Thyroid gland (tissue), 4 donors: ENCODE measurements at regions of chr9 and their contacts with region 1.

Region 1: GRCh38 chr9:130682490-130683121 is 11.0 kb upstream of the EXOSC2 start:
- DNase-seq: peak; percentile 85 to 89
- H3K4me3 ChIP-seq: peak overlapping the region in 1 of 3 donors; percentile 43
- H3K27ac ChIP-seq: no peak overlapping the region
- H3K4me1 ChIP-seq: peaks cover 12 to 14% of the 10 kb centered on the region in 2 donors
- H3K27me3 ChIP-seq: no peaks in the 10 kb centered on the region
- CTCF ChIP-seq: peak; percentile 59 to 83 (median 82)
- POLR2A ChIP-seq: no peak

Region 2: GRCh38 chr9:130461218-130461630 is 221.4 kb before region 1 on chr9:
- intact Hi-C with region 1: loop called (anchors 1 kb)
- DNase-seq: peak; percentile 46 to 53
- H3K4me3 ChIP-seq: no peak overlapping the region
- H3K27ac ChIP-seq: no peak overlapping the region
- H3K4me1 ChIP-seq: no peaks in the 10 kb centered on the region
- H3K27me3 ChIP-seq: no peaks in the 10 kb centered on the region
- CTCF ChIP-seq: peak; percentile 78 to 88 (median 86)
- POLR2A ChIP-seq: no peak

Region 3: DNA sequence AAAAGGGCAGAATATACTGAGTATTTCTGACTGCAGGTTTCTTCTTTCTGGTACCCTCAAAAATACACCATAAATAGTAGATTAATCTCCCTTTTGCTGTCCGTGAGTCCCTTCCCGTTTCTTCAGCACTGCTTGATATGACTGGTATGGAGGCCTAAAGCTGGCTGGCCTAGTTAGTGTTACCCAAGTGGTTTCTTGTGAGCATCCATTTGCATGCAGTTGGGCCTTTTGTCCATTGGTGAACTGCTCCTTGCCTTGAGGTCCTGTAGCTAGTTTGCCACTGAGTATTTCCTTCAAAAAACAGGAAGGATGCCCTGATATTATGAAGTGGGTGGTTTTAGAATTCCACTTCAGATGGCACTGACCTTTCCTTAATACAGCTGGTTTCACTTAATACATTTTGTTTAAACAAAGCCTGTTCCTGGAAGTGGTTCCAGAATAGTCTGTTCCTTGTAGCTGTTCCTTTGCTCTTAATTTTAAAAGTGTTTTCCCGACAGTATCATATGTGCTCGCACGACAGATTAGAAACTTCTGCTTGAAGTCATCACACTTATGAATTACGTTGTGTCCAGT is 112.4 kb after region 1 on chr9:
- intact Hi-C with region 1: no loop called
- DNase-seq: no peak
- H3K4me3 ChIP-seq: no peak overlapping the region
- H3K27ac ChIP-seq: peak overlapping the region; percentile 73 to 92 (median 85)
- H3K4me1 ChIP-seq: peaks cover 25 to 27% of the 10 kb centered on the region in 2 donors
- H3K27me3 ChIP-seq: no peaks in the 10 kb centered on the region
- CTCF ChIP-seq: peak in 2 of 6 experiments; percentile 3 to 10
- POLR2A ChIP-seq: no peak